Activated CD4-positive, alpha-beta T cell treated with anti-CD3 and anti-CD28 coated beads, Interleukin-2, amount 10 ng/mL, durations not matched to agents 24 days and 14 days (primary cell): ENCODE measurements at regions of chr6 and their contacts with region 1.

Region 1: GRCh38 chr6:52577022-52577777 is at the start of gene TRAM2:
- DNase-seq: peak; percentile 94
- H3K4me3 Mint-ChIP-seq: peak within 1 kb of the TSS; percentile 81
- H3K27ac Mint-ChIP-seq: peak within 1 kb of the TSS; percentile 71
- H3K4me1 Mint-ChIP-seq: peaks cover 30% of the 10 kb centered on the region
- H3K27me3 Mint-ChIP-seq: peaks cover 13% of the 10 kb centered on the region
- total RNA-seq, gene TRAM2: 2.6 TPM in 2 replicates

Region 2: GRCh38 chr6:52475307-52475706 is 101.9 kb before region 1 on chr6:
- intact Hi-C with region 1: no loop called
- DNase-seq: no peak
- H3K4me3 Mint-ChIP-seq: no peak overlapping the region
- H3K27ac Mint-ChIP-seq: no peak overlapping the region
- H3K4me1 Mint-ChIP-seq: no peaks in the 10 kb centered on the region
- H3K27me3 Mint-ChIP-seq: peaks cover 9% of the 10 kb centered on the region

Region 3: DNA sequence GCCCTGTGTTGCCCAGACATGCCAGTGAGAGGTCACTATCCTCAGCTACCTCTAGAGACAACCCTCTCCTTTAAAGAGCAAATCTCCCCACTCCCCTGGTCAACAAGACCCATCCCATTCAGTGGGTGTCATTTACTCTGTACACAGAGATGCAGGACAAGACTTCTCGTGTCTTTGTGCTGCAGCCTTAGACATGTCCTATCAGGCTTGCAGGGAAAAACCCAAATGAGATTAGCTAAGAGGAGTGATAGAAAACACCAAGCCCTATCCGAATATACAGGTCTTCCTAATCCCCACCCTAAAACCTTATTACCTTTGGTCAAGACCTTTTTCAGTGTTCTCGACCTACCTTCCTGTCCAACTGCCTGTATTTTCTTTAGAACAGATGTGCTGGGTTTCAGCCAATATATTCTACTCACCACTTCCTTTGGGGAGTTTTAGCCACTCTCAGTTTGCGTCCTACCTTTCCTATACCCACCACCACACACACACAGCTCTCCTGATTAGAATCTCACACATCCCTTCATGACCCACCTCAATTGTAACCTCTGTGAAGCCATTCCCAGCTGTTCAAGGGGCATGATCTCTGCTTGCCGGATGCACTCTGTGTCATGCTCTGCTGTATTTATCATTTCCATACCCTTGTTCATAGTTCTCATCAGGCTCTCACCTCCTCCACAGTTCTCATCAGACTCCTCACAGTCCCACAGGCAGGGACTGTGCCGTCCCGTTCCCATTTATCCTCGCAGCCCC is 40.0 kb before region 1 on chr6:
- intact Hi-C with region 1: loop called (anchors 2 kb)
- DNase-seq: peak; percentile 63
- H3K4me3 Mint-ChIP-seq: peak overlapping the region; percentile 7
- H3K27ac Mint-ChIP-seq: peak overlapping the region; percentile 36
- H3K4me1 Mint-ChIP-seq: peaks cover 34% of the 10 kb centered on the region
- H3K27me3 Mint-ChIP-seq: no peaks in the 10 kb centered on the region

Region 4: GRCh38 chr6:52840763-52841585 is 263.8 kb after region 1 on chr6 and contains the start of gene GSTA5:
- intact Hi-C with region 1: no loop called
- DNase-seq: peak; percentile 48
- H3K4me3 Mint-ChIP-seq: no peak within 1 kb of the TSS
- H3K27ac Mint-ChIP-seq: no peak within 1 kb of the TSS
- H3K4me1 Mint-ChIP-seq: no peaks in the 10 kb centered on the region
- H3K27me3 Mint-ChIP-seq: peaks cover 27% of the 10 kb centered on the region
- total RNA-seq, gene GSTA5: not detected in 2 replicates